CD8-positive, alpha-beta T cell (primary cell): ENCODE measurements at regions of chr2 and their contacts with region 1.

Region 1: GRCh38 chr2:112749755-112750559 is 14.5 kb downstream of the CKAP2L start:
- DNase-seq: peak; percentile 62 to 87 (median 82)
- ATAC-seq: peak; percentile 94
- H3K4me3 ChIP-seq: no peak overlapping the region
- H3K4me3 Mint-ChIP-seq: peak overlapping the region; percentile 20
- H3K27ac ChIP-seq: peak overlapping the region in 1 of 2 experiments; percentile 48
- H3K27ac Mint-ChIP-seq: peak overlapping the region; percentile 9
- H3K4me1 ChIP-seq: no peaks in the 10 kb centered on the region
- H3K4me1 Mint-ChIP-seq: peaks cover 6% of the 10 kb centered on the region
- H3K27me3 ChIP-seq: no peaks in the 10 kb centered on the region
- H3K27me3 Mint-ChIP-seq: no peaks in the 10 kb centered on the region
- CTCF ChIP-seq: peak; percentile 92

Region 2: GRCh38 chr2:112737542-112738232 is 12.3 kb before region 1 on chr2:
- CTCF ChIA-PET with region 1: interaction called, 17 read pairs
- POLR2A ChIA-PET with region 1: no interaction called
- intact Hi-C with region 1: no loop called
- DNase-seq: no peak
- ATAC-seq: no peak
- H3K4me3 ChIP-seq: no peak overlapping the region
- H3K4me3 Mint-ChIP-seq: no peak overlapping the region
- H3K27ac ChIP-seq: no peak overlapping the region
- H3K27ac Mint-ChIP-seq: no peak overlapping the region
- H3K4me1 ChIP-seq: no peaks in the 10 kb centered on the region
- H3K4me1 Mint-ChIP-seq: no peaks in the 10 kb centered on the region
- H3K27me3 ChIP-seq: no peaks in the 10 kb centered on the region
- H3K27me3 Mint-ChIP-seq: no peaks in the 10 kb centered on the region
- CTCF ChIP-seq: no peak

Region 3: GRCh38 chr2:112884869-112885505 is 135.0 kb after region 1 on chr2:
- CTCF ChIA-PET with region 1: interaction called, 44 read pairs
- POLR2A ChIA-PET with region 1: interaction called, 3 read pairs
- intact Hi-C with region 1: loop called (anchors 1 kb)
- DNase-seq: peak; percentile 40 to 73 (median 65)
- ATAC-seq: peak; percentile 78
- H3K4me3 ChIP-seq: no peak overlapping the region
- H3K4me3 Mint-ChIP-seq: no peak overlapping the region
- H3K27ac ChIP-seq: no peak overlapping the region
- H3K27ac Mint-ChIP-seq: no peak overlapping the region
- H3K4me1 ChIP-seq: peaks cover 5% of the 10 kb centered on the region
- H3K4me1 Mint-ChIP-seq: peaks cover 12% of the 10 kb centered on the region
- H3K27me3 ChIP-seq: no peaks in the 10 kb centered on the region
- H3K27me3 Mint-ChIP-seq: no peaks in the 10 kb centered on the region
- CTCF ChIP-seq: peak; percentile 83

Region 4: DNA sequence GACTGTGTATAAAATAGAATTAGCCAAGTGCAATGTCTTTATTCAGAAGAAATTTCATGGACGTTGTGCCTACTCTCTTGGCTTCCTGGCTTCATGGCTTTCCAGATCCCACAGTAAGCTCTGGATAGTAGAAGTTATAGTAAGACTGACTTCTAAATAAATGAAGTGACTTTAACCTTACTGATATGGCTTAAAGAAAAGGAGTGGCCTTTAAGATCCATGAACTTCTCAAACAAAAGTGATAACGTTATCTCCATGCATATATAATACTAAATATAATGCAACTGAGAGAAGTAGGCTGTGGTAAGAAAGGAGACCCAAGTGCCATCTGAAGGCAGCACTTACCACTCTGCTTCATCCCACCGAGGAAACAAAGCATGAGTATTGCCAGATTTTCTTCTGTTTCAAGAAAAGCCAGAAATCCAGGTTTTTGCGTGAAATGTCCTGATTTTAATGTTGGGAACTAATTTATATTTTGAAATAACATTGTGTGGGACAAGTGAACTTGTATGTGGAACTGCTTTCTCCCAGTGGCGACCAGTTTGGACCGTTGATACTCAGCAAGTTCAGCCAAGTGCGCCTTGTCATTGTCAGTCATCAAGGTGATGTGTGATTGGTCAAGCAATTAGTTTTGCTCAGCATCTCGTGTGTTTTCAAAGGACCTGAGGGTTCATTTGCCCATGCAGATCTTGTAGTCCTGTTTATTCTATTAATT is 147.1 kb after region 1 on chr2:
- CTCF ChIA-PET with region 1: no interaction called
- POLR2A ChIA-PET with region 1: no interaction called
- intact Hi-C with region 1: no loop called
- DNase-seq: no peak
- ATAC-seq: no peak
- H3K4me3 ChIP-seq: no peak overlapping the region
- H3K4me3 Mint-ChIP-seq: no peak overlapping the region
- H3K27ac ChIP-seq: no peak overlapping the region
- H3K27ac Mint-ChIP-seq: no peak overlapping the region
- H3K4me1 ChIP-seq: no peaks in the 10 kb centered on the region
- H3K4me1 Mint-ChIP-seq: no peaks in the 10 kb centered on the region
- H3K27me3 ChIP-seq: no peaks in the 10 kb centered on the region
- H3K27me3 Mint-ChIP-seq: peaks cover 9% of the 10 kb centered on the region
- CTCF ChIP-seq: no peak

Region 5: GRCh38 chr2:112941753-112942658 is 192.0 kb after region 1 on chr2:
- CTCF ChIA-PET with region 1: interaction called, 23 read pairs
- POLR2A ChIA-PET with region 1: no interaction called
- intact Hi-C with region 1: loop called (anchors 1 kb)
- DNase-seq: peak; percentile 22 to 79 (median 59)
- ATAC-seq: peak; percentile 66
- H3K4me3 ChIP-seq: no peak overlapping the region
- H3K4me3 Mint-ChIP-seq: no peak overlapping the region
- H3K27ac ChIP-seq: no peak overlapping the region
- H3K27ac Mint-ChIP-seq: no peak overlapping the region
- H3K4me1 ChIP-seq: no peaks in the 10 kb centered on the region
- H3K4me1 Mint-ChIP-seq: peaks cover 6% of the 10 kb centered on the region
- H3K27me3 ChIP-seq: no peaks in the 10 kb centered on the region
- H3K27me3 Mint-ChIP-seq: no peaks in the 10 kb centered on the region
- CTCF ChIP-seq: peak; percentile 62

Region 6: GRCh38 chr2:112958428-112959108 is 208.6 kb after region 1 on chr2:
- CTCF ChIA-PET with region 1: interaction called, 9 read pairs
- POLR2A ChIA-PET with region 1: no interaction called
- intact Hi-C with region 1: loop called in 1 of 2 experiments (anchors 5 kb)
- DNase-seq: peak in 5 of 9 experiments; percentile 30 to 73 (median 59)
- ATAC-seq: peak; percentile 74
- H3K4me3 ChIP-seq: no peak overlapping the region
- H3K4me3 Mint-ChIP-seq: no peak overlapping the region
- H3K27ac ChIP-seq: no peak overlapping the region
- H3K27ac Mint-ChIP-seq: no peak overlapping the region
- H3K4me1 ChIP-seq: no peaks in the 10 kb centered on the region
- H3K4me1 Mint-ChIP-seq: no peaks in the 10 kb centered on the region
- H3K27me3 ChIP-seq: no peaks in the 10 kb centered on the region
- H3K27me3 Mint-ChIP-seq: peaks cover 3% of the 10 kb centered on the region
- CTCF ChIP-seq: peak; percentile 74

Region 7: DNA sequence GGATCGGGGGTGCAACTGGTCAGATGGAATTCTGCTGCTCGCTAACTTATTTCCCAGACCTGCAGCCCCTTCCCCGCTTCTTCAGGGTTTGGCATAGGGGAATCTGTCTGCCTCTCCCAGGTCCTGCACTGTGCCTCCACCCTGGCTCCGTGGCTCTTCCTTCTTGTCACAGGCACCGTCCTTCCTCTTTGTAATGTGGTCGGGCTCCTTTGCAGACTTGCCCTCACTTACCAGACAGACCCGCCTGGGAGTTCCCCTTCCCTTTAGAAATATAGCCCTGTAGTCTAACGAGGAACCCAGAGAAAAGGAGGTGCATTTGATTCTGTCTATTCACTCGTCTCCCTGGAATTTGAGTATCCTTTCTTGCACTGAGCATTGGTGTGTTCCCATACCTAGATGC is 592.7 kb after region 1 on chr2:
- CTCF ChIA-PET with region 1: no interaction called
- POLR2A ChIA-PET with region 1: no interaction called
- intact Hi-C with region 1: no loop called
- DNase-seq: peak in 3 of 9 experiments; percentile 12 to 57 (median 12)
- ATAC-seq: peak; percentile 51
- H3K4me3 ChIP-seq: no peak overlapping the region
- H3K4me3 Mint-ChIP-seq: no peak overlapping the region
- H3K27ac ChIP-seq: no peak overlapping the region
- H3K27ac Mint-ChIP-seq: no peak overlapping the region
- H3K4me1 ChIP-seq: peaks cover 10% of the 10 kb centered on the region
- H3K4me1 Mint-ChIP-seq: peaks cover 8% of the 10 kb centered on the region
- H3K27me3 ChIP-seq: no peaks in the 10 kb centered on the region
- H3K27me3 Mint-ChIP-seq: peaks cover 15% of the 10 kb centered on the region
- CTCF ChIP-seq: no peak